KBM-7 (cell line): ENCODE measurements at regions of chr3 and their contacts with region 1.

Region 1: DNA sequence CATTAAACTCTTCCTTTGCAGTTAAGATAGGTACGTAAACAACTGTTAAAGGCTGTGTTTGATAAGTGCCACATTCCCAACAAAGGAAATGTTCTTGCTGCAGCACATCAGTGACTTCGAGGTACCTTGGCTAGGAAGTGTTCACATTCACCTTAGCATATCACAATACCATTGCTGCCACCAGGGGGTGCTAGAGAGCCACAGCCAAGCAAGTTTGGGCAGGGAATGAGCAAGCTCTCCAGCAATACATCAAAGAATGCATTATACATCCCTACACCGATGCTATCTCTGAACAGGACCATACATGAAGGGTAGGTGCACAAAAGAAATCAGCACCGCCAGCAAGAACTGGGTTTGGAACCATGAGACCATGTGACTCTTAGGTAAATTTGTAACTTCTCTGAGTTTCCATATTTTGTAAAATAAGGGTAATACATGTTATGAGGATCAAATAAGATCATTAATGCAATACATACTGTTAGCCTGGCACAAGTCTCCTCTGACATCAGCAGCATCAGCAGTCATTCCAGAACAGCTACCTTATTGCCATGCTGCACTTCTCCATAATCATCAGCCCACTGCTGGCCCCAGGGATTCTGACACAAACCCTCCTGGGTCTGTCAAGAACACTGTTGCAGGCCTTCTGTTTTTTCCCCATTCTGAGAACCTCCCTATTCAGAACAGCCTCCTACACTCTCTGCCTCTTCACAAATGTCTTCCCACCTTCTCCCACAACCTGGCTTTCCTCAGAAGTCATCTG is 37.6 kb downstream of the RYK start:
- DNase-seq: peak; percentile 76

Region 2: GRCh38 chr3:133833880-133834620 is 379.0 kb before region 1 on chr3:
- in situ Hi-C with region 1: no loop called
- DNase-seq: no peak

Region 3: DNA sequence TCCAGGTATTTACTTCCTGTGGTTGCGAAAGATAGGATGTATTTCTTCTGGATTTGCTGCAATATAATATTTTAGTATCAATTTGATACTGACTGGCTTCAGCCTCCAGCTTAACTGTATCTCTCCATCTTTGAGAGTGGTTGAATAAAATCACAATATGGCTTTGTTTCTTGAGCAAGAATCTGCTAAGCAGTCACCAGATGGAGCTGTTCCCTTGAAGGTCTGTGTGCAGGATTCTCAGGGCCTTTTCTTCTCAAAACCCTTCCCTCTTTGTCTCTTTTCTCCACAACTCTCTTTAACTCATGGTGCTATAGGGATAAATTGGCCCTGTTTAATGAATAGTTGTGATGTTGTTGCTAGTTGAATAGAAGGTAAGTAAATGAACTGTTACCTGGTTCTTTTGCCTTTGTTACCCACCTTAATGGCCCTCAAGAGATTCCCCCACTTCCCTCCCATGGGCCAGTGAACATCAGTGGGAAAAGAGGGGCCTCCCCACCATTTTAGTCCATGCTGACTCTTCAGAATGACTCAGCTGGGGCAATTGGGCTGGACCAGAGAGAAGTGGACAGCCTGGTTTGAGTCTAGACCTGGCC is 282.6 kb before region 1 on chr3:
- in situ Hi-C with region 1: loop called (anchors 10 kb)
- DNase-seq: peak; percentile 69

Region 4: GRCh38 chr3:134308350-134308891 is 95.3 kb after region 1 on chr3:
- in situ Hi-C with region 1: loop called (anchors 10 kb)
- DNase-seq: peak; percentile 85

Region 5: GRCh38 chr3:134473868-134474546 is 260.9 kb after region 1 on chr3:
- in situ Hi-C with region 1: loop called (anchors 25 kb)
- DNase-seq: peak; percentile 74

Region 6: DNA sequence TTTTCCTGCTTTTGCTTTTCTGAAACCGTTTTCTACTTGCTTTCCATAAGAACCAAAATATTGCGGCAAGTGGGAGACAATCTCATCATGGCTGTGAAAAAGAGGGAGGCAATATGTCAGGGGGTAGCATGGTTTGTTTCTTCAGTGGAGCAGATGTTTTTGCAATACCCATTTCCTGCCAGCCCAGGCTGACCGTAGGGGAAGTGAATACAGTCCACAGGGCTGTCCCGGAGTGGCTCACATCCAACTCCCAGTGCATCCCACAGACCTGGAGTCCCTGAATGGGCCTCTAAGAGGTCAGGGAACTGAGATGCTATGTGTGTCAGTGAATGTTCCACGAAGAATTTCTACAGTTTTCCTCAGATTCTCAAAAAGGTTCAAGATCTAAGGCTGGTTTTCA is 651.5 kb after region 1 on chr3:
- in situ Hi-C with region 1: no loop called
- DNase-seq: no peak